H1 (cell line): ENCODE measurements at regions of chr19 and their contacts with region 1.

Region 1: GRCh38 chr19:41263850-41264580 is at the start of gene HNRNPUL1:
- DNase-seq: peak; percentile 100
- H3K4me3 ChIP-seq: peak within 1 kb of the TSS; percentile 82 to 100 (median 98)
- H3K27ac ChIP-seq: peak within 1 kb of the TSS; percentile 99
- H3K4me1 ChIP-seq: peaks cover 0 to 10% (median 5%) of the 10 kb centered on the region in 4 experiments; a peak in 6 of 7 replicates
- H3K27me3 ChIP-seq: no peaks in the 10 kb centered on the region
- CTCF ChIP-seq: no peak; a peak in 1 of 4 replicates
- EP300 ChIP-seq: no peak
- POLR2A ChIP-seq: peak in 1 of 2 experiments; percentile 68; a peak in 2 of 3 replicates
- RAD21 ChIP-seq: no peak
- total RNA-seq, gene HNRNPUL1: 264 and 268 TPM in 2 replicates

Region 2: DNA sequence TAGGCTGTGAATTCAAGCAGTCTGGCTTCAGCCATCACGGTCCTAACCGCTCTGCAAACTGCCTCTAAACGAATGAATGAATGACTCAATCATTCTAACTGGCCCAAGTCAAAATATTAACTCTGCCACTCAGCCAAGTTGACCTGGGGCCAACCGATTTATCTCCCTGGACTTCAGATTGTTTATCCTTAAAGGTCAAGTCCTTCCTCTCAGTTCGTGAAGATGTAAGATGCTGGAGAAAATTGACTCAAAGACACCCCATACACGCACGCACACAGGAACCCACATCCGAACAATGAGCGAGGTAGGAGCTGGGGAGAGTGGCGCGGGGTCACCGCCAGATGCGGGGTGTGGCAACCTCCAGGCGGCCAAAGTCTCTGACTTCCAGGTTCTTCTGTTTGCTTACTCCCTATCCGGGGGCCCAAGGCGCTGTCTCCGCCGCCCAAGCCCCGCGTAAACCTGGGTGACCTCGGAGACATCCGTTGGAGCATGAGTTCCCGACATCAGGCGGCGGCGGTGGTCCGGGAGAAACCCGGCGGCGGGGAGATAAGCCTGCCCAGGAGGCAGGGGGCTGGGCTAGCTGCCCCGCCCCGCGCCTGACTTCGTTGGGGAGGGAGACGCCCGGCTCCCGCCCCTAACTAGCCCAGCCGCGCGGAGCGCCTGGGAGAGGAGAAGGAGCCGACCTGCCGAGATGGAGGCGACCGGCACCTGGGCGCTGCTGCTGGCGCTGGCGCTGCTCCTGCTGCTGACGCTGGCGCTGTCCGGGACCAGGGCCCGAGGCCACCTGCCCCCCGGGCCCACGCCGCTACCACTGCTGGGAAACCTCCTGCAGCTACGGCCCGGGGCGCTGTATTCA is 71.2 kb before region 1 on chr19 and contains the start of gene CYP2S1:
- CTCF ChIA-PET with region 1: interaction called, 3 read pairs
- POLR2A ChIA-PET with region 1: interaction called, 23 read pairs
- DNase-seq: peak in 1 of 2 experiments; percentile 85
- H3K4me3 ChIP-seq: peak within 1 kb of the TSS; percentile 72 to 93 (median 80)
- H3K27ac ChIP-seq: peak within 1 kb of the TSS; percentile 65; the same call in 1 of the 2 replicates
- H3K4me1 ChIP-seq: peaks cover 13 to 26% (median 20%) of the 10 kb centered on the region in 4 experiments
- H3K27me3 ChIP-seq: no peaks in the 10 kb centered on the region
- CTCF ChIP-seq: no peak
- EP300 ChIP-seq: peak in 1 of 2 experiments; percentile 20; a peak in 1 of 3 replicates
- POLR2A ChIP-seq: peak in 1 of 2 experiments; percentile 49; a peak in 1 of 3 replicates
- RAD21 ChIP-seq: no peak
- total RNA-seq, gene CYP2S1: 245 and 267 TPM in 2 replicates

Region 3: GRCh38 chr19:41218615-41219507 is 45.2 kb before region 1 on chr19 and contains the start of gene AXL:
- CTCF ChIA-PET with region 1: interaction called, 10 read pairs
- POLR2A ChIA-PET with region 1: interaction called, 66 read pairs
- DNase-seq: peak; percentile 78 to 90
- H3K4me3 ChIP-seq: peak within 1 kb of the TSS; percentile 32 to 89 (median 61)
- H3K27ac ChIP-seq: peak within 1 kb of the TSS; percentile 56; the same call in 1 of the 2 replicates
- H3K4me1 ChIP-seq: peaks cover 0 to 17% (median 13%) of the 10 kb centered on the region in 4 experiments; a peak in 6 of 7 replicates
- H3K27me3 ChIP-seq: no peaks in the 10 kb centered on the region
- CTCF ChIP-seq: no peak
- EP300 ChIP-seq: peak in 1 of 2 experiments; percentile 63; a peak in 1 of 3 replicates
- POLR2A ChIP-seq: peak in 1 of 2 experiments; percentile 25; a peak in 1 of 3 replicates
- RAD21 ChIP-seq: 0 out of 4 replicates have a peak, but pooled peaks have one; percentile 0 to 14
- total RNA-seq, gene AXL: 51.0 and 53.3 TPM in 2 replicates

Region 4: GRCh38 chr19:41249707-41250423 is 14.2 kb before region 1 on chr19:
- CTCF ChIA-PET with region 1: interaction called, 21 read pairs
- POLR2A ChIA-PET with region 1: interaction called, 10 read pairs
- DNase-seq: no peak
- H3K4me3 ChIP-seq: no peak overlapping the region
- H3K27ac ChIP-seq: no peak overlapping the region
- H3K4me1 ChIP-seq: no peaks in the 10 kb centered on the region
- H3K27me3 ChIP-seq: no peaks in the 10 kb centered on the region
- CTCF ChIP-seq: no peak
- EP300 ChIP-seq: no peak
- POLR2A ChIP-seq: no peak
- RAD21 ChIP-seq: no peak

Region 5: GRCh38 chr19:41310033-41310758 is 46.2 kb after region 1 on chr19 and contains the start of gene CCDC97:
- CTCF ChIA-PET with region 1: interaction called, 8 read pairs
- POLR2A ChIA-PET with region 1: interaction called, 579 read pairs
- DNase-seq: peak; percentile 66 to 95
- H3K4me3 ChIP-seq: peak within 1 kb of the TSS; percentile 62 to 91 (median 77)
- H3K27ac ChIP-seq: peak within 1 kb of the TSS; percentile 92
- H3K4me1 ChIP-seq: peaks cover 0 to 10% (median under 1%) of the 10 kb centered on the region in 4 experiments; a peak in 3 of 7 replicates
- H3K27me3 ChIP-seq: no peaks in the 10 kb centered on the region
- CTCF ChIP-seq: no peak
- EP300 ChIP-seq: no peak
- POLR2A ChIP-seq: peak; percentile 81 to 93
- RAD21 ChIP-seq: no peak
- total RNA-seq, gene CCDC97: 21.1 and 27.1 TPM in 2 replicates

Region 6: GRCh38 chr19:41351339-41352245 is 87.6 kb after region 1 on chr19:
- CTCF ChIA-PET with region 1: no interaction called
- POLR2A ChIA-PET with region 1: no interaction called
- DNase-seq: peak in 1 of 2 experiments; percentile 78
- H3K4me3 ChIP-seq: peak overlapping the region; percentile 52 to 75 (median 70)
- H3K27ac ChIP-seq: no peak overlapping the region
- H3K4me1 ChIP-seq: peaks cover 0 to 14% (median 4%) of the 10 kb centered on the region in 4 experiments; a peak in 5 of 7 replicates
- H3K27me3 ChIP-seq: peaks cover 10 to 36% (median 28%) of the 10 kb centered on the region in 4 experiments
- CTCF ChIP-seq: no peak
- EP300 ChIP-seq: no peak
- POLR2A ChIP-seq: no peak
- RAD21 ChIP-seq: no peak